ENCODE measurements at regions of chr2 and their contacts with region 1.

Region 1: GRCh38 chr2:100262555-100263320 is 59.6 kb downstream of the LONRF2 start:
- DNase-seq: peak; percentile 76 to 82 (median 81)
- ATAC-seq: peak; percentile 89
- H3K4me3 ChIP-seq: no peak overlapping the region
- H3K27ac ChIP-seq: no peak overlapping the region
- H3K4me1 ChIP-seq: peaks cover 3 to 8% of the 10 kb centered on the region in 2 experiments; a peak in 3 of 5 replicates
- H3K27me3 ChIP-seq: peaks cover 6 to 19% of the 10 kb centered on the region in 2 experiments; a peak in 3 of 5 replicates
- CTCF ChIP-seq: peak; percentile 91 to 94 (median 94)
- EP300 ChIP-seq: no peak
- POLR2A ChIP-seq: no peak
- RAD21 ChIP-seq: peak; percentile 97 to 99

Region 2: DNA sequence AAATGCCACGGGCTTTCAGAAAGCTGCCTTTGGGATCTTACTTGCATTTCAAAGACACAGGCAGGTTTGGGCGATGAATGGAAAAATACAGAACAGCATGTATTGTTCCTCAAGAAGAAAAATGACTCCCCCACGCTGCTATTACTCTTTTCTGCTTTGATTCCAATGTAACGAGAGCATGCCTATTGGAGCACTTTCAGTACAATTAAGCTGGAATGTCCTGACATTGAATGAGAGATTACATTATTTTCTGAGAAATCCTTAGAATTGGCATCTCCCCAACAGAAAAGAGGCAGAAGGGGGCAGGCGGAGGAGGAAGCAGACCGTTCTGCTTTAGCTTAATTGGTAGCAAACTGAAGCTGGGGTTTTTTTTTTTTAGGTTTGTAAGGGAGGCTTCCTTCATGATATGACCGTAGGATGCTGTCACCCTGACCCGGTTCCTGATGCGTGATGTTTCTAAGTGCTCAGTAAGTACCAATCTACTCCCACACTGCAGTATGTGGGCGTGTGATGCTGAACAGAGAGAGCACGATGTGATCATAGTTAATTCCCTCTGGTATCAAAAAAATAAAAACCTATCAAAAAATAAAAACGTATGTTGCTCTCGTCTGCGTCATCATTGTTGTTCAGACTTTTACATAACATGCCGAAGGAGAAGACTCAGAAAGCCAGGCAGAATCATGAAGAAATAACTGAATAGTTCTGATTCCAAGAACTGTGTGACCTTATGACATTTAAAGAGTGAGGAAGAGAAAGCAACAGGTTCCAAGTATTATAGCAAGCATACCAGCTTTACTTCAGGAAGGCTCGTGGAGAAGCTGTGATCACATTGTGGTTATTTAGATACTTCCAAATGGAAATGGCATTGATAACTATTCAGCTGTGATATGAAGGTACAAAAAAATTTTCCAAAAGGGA is 19.0 kb after region 1 on chr2:
- CTCF ChIA-PET with region 1: no interaction called
- POLR2A ChIA-PET with region 1: interaction called, 3 read pairs
- in situ Hi-C with region 1: no loop called
- intact Hi-C with region 1: loop called (anchors 2 kb)
- DNase-seq: peak; percentile 28 to 62 (median 31)
- ATAC-seq: peak; percentile 45
- H3K4me3 ChIP-seq: no peak overlapping the region
- H3K27ac ChIP-seq: peak overlapping the region; percentile 41
- H3K4me1 ChIP-seq: peaks cover 37 to 77% of the 10 kb centered on the region in 2 experiments
- H3K27me3 ChIP-seq: no peaks in the 10 kb centered on the region
- CTCF ChIP-seq: no peak
- EP300 ChIP-seq: no peak; the same call in 1 of the 2 replicates
- POLR2A ChIP-seq: no peak
- RAD21 ChIP-seq: no peak

Region 3: GRCh38 chr2:100339823-100340222 is 77.1 kb after region 1 on chr2:
- CTCF ChIA-PET with region 1: no interaction called
- POLR2A ChIA-PET with region 1: no interaction called
- in situ Hi-C with region 1: loop called (anchors 10 kb)
- intact Hi-C with region 1: no loop called
- DNase-seq: no peak
- ATAC-seq: peak; percentile 33; the same call in 2 of the 3 replicates
- H3K4me3 ChIP-seq: no peak overlapping the region
- H3K27ac ChIP-seq: no peak overlapping the region
- H3K4me1 ChIP-seq: peaks cover 3 to 8% of the 10 kb centered on the region in 2 experiments; a peak in 3 of 5 replicates
- H3K27me3 ChIP-seq: no peaks in the 10 kb centered on the region; a peak in 1 of 5 replicates
- CTCF ChIP-seq: no peak
- EP300 ChIP-seq: no peak
- POLR2A ChIP-seq: no peak
- RAD21 ChIP-seq: no peak

Region 4: GRCh38 chr2:100381240-100381639 is 118.5 kb after region 1 on chr2:
- CTCF ChIA-PET with region 1: interaction called, 66 read pairs
- POLR2A ChIA-PET with region 1: interaction called, 11 read pairs
- in situ Hi-C with region 1: loop called (anchors 5 kb)
- intact Hi-C with region 1: loop called (anchors 1 kb)
- DNase-seq: peak; percentile 66 to 90 (median 71)
- ATAC-seq: peak; percentile 96
- H3K4me3 ChIP-seq: no peak overlapping the region
- H3K27ac ChIP-seq: no peak overlapping the region
- H3K4me1 ChIP-seq: no peaks in the 10 kb centered on the region; a peak in 1 of 5 replicates
- H3K27me3 ChIP-seq: no peaks in the 10 kb centered on the region
- CTCF ChIP-seq: peak; percentile 85 to 95 (median 89)
- EP300 ChIP-seq: no peak
- POLR2A ChIP-seq: no peak
- RAD21 ChIP-seq: peak; percentile 95 to 98